H1 (cell line): ENCODE measurements at regions of chr2 and their contacts with region 1.

Region 1: DNA sequence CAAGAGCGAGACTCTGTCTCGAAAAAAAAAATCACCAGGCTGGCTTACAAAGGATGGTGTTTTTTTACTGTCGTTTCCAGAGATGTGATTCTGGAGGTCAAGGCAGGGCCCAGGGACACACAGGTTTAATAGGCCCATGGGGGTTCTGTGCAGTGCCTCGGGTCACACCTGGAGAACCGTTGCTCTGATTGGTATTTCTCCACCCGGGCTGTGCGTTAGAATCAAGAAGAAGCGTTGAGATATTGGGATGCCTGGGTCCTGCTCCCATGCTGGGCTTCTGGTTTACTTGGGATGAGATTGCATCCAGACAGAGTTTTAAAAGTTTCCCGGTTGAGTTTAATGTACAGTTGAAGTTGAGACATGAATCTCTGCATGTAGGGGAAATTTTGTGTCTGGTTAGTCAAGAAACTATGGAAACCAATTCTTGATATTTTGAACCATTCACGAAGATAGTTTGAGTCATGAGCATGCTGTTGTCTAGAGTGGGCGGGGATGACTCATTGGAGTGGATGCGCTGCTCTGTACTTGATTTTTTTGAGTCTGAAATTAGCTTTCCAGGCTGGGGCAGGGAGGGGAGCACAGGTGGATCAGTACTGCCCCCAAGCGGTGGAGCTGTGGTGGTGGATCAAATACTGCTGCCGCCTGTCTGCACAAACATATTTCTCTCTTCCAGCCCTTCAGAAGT is 50.1 kb downstream of the GREB1 start:
- DNase-seq: peak in 1 of 2 experiments; percentile 82
- H3K4me3 ChIP-seq: no peak overlapping the region
- H3K27ac ChIP-seq: no peak overlapping the region
- H3K4me1 ChIP-seq: peaks cover 2 to 4% (median 2%) of the 10 kb centered on the region in 4 experiments; a peak in 5 of 7 replicates
- H3K27me3 ChIP-seq: no peaks in the 10 kb centered on the region
- CTCF ChIP-seq: peak; percentile 85 to 95 (median 95)
- EP300 ChIP-seq: no peak
- POLR2A ChIP-seq: no peak
- RAD21 ChIP-seq: peak; percentile 96 to 97

Region 2: DNA sequence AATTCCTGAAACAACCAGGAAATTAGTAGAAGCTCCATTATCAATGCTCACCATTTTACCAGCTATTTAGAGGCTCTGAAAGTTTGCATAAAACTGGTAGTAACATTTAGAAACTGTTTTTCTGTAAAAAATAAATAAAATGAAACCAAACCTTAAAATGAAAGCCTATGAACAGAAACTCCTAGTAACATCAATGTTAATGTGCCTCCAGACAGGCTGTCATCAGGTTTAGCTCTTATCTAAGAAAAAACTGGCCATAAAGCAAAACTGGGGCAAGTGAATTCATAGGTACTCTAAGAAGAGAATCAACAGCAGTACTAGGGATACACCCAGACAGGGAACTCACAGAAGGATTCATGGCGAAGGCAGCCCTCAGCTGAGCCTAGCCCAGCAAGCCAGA is 126.0 kb before region 1 on chr2:
- CTCF ChIA-PET with region 1: interaction called, 52 read pairs
- POLR2A ChIA-PET with region 1: no interaction called
- DNase-seq: no peak
- H3K4me3 ChIP-seq: no peak overlapping the region
- H3K27ac ChIP-seq: no peak overlapping the region
- H3K4me1 ChIP-seq: peaks cover 0 to 2% (median 0%) of the 10 kb centered on the region in 4 experiments; a peak in 1 of 7 replicates
- H3K27me3 ChIP-seq: no peaks in the 10 kb centered on the region
- CTCF ChIP-seq: no peak
- EP300 ChIP-seq: no peak
- POLR2A ChIP-seq: no peak
- RAD21 ChIP-seq: no peak

Region 3: GRCh38 chr2:11498543-11499080 is 85.4 kb before region 1 on chr2:
- CTCF ChIA-PET with region 1: interaction called, 558 read pairs
- POLR2A ChIA-PET with region 1: no interaction called
- DNase-seq: no peak
- H3K4me3 ChIP-seq: no peak overlapping the region
- H3K27ac ChIP-seq: no peak overlapping the region
- H3K4me1 ChIP-seq: peaks cover 5 to 18% (median 10%) of the 10 kb centered on the region in 4 experiments
- H3K27me3 ChIP-seq: no peaks in the 10 kb centered on the region
- CTCF ChIP-seq: no peak
- EP300 ChIP-seq: no peak
- POLR2A ChIP-seq: no peak
- RAD21 ChIP-seq: no peak

Region 4: GRCh38 chr2:11521775-11522174 is 62.2 kb before region 1 on chr2:
- CTCF ChIA-PET with region 1: interaction called, 20 read pairs
- POLR2A ChIA-PET with region 1: no interaction called
- DNase-seq: no peak
- H3K4me3 ChIP-seq: no peak overlapping the region
- H3K27ac ChIP-seq: no peak overlapping the region
- H3K4me1 ChIP-seq: peaks cover 0 to 7% (median 3%) of the 10 kb centered on the region in 4 experiments; a peak in 1 of 7 replicates
- H3K27me3 ChIP-seq: no peaks in the 10 kb centered on the region
- CTCF ChIP-seq: no peak
- EP300 ChIP-seq: no peak
- POLR2A ChIP-seq: no peak
- RAD21 ChIP-seq: no peak

Region 5: GRCh38 chr2:11553661-11554398 is 30.2 kb before region 1 on chr2:
- CTCF ChIA-PET with region 1: interaction called, 377 read pairs
- POLR2A ChIA-PET with region 1: no interaction called
- DNase-seq: no peak
- H3K4me3 ChIP-seq: no peak overlapping the region
- H3K27ac ChIP-seq: no peak overlapping the region
- H3K4me1 ChIP-seq: peaks cover 4 to 9% (median 6%) of the 10 kb centered on the region in 4 experiments
- H3K27me3 ChIP-seq: no peaks in the 10 kb centered on the region
- CTCF ChIP-seq: no peak
- EP300 ChIP-seq: no peak
- POLR2A ChIP-seq: no peak
- RAD21 ChIP-seq: no peak

Region 6: DNA sequence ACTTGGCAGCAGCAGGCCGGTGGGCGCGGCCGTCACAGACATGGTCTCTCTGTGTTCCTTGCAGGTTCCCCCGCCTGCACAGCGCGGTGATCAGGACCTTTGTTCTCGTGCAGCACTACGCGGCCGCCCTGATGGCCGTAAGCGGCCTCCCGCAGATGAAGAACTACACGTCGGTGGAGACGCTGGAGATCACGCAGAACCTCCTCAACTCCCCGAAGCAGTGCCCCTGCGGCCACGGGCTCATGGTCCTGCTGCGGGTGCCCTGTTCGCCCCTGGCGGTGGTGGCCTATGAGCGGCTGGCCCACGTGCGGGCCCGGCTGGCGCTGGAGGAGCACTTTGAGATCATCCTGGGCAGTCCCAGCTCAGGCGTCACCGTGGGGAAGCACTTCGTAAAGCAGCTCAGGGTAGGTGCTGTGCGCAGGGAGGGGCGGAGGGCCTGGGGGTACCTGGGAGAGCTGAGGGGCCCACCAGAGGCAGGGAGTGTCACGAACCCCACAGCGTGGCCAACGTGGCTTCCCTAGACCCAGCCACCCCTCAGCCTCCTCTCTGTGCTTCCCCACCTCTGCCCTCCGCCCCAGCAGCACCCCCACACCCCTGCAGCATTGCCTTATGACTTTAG is 26.8 kb after region 1 on chr2:
- CTCF ChIA-PET with region 1: interaction called, 18 read pairs
- POLR2A ChIA-PET with region 1: no interaction called
- DNase-seq: no peak
- H3K4me3 ChIP-seq: no peak overlapping the region
- H3K27ac ChIP-seq: no peak overlapping the region
- H3K4me1 ChIP-seq: no peaks in the 10 kb centered on the region
- H3K27me3 ChIP-seq: no peaks in the 10 kb centered on the region
- CTCF ChIP-seq: no peak
- EP300 ChIP-seq: no peak
- POLR2A ChIP-seq: no peak
- RAD21 ChIP-seq: no peak

Region 7: DNA sequence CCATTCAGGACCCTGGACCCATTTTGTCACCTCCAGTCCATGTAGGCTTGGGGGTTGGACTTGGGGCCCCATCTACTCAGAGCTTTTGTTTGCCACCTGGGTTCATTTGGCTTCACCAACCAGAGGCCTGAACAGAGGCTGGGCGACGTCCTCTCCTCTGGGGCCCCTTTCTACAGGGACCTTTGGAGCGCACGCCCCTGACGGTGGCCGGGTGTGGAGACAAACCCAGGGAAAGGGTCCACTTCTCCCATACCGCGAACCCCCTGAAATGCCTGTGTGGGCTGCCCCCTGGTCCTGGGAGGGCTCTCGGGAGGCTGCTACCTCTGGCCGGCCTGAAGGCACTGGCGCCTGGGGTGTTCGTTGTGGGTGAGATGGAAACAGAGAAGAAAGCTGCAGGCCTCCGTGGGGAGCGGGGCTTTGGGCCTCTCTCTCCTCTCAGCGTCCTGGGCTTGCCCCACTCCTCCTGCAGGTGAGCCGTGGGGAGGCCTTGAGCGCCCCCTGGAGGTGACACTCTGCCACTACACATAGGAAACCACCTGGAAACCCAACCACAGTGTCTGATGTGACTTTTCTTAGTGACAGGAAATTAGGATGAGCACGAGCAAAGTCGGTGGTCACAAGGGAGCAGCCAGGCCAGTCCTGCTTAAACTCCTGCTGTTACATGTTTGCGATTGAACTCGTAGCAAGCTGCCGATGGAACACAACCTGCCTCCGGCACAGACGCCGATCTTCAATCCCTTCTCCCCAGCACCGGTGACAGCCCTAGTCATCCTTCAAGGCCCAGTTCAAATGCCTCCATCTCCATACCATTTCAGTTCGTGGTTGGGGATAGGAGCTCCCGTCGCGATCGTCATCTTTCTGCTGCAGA is 98.0 kb after region 1 on chr2:
- CTCF ChIA-PET with region 1: interaction called, 41 read pairs
- POLR2A ChIA-PET with region 1: no interaction called
- DNase-seq: peak in 1 of 2 experiments; percentile 94
- H3K4me3 ChIP-seq: no peak overlapping the region; a peak in 2 of 8 replicates
- H3K27ac ChIP-seq: no peak overlapping the region
- H3K4me1 ChIP-seq: peaks cover 3 to 13% (median 10%) of the 10 kb centered on the region in 4 experiments; a peak in 6 of 7 replicates
- H3K27me3 ChIP-seq: no peaks in the 10 kb centered on the region
- CTCF ChIP-seq: peak; percentile 86 to 96 (median 95)
- EP300 ChIP-seq: no peak
- POLR2A ChIP-seq: no peak
- RAD21 ChIP-seq: peak; percentile 77 to 88